ENCODE measurements at regions of chr22 and their contacts with region 1.

Region 1: DNA sequence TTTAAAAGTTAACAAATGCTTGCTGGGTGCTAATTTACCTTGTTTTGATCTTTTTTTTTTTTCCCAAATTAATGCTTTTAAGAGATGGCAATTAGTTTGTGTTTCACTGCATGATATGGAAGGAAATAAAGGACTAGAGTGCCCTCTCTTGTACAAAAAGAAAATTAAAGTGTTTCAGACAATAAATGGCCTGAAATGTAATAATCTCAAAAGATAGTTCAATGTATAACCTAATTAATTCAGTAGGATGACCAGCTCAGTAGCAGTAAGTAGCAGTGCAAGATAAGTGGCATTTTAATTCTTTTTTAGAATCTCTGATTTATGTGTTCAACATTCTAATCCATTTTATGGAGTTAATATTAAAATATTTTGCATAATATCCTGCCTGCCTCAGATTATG is 39.9 kb upstream of the MYO18B start:
- DNase-seq: no peak
- ATAC-seq: peak in 1 of 2 donors; percentile 52

Region 2: GRCh38 chr22:25404928-25405816 is 296.9 kb before region 1 on chr22:
- intact Hi-C with region 1: loop called in 1 of 2 experiments (anchors 5 kb)
- DNase-seq: peak; percentile 86
- ATAC-seq: peak; percentile 80

Region 3: DNA sequence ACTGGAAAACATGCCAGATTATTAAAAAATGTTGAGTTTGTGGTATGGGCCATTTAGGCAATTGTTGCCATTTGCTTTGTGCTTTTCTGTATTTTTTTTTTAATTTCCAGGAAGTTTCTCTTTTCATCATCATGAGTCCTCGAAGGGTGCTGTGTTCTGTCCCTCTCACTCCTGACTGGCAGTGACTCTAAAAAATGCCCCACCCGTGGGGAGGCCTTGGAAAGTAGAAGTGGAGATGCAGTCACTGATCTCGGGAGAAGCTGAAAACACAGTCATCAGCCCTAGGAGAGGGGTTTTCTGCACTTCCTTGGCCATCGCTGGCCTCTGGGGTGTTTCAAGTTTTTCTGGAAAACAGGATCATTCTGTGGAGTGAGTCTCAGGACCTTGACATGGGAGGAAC is 236.1 kb before region 1 on chr22:
- intact Hi-C with region 1: loop called (anchors 2 to 5 kb)
- DNase-seq: no peak
- ATAC-seq: no peak

Region 4: DNA sequence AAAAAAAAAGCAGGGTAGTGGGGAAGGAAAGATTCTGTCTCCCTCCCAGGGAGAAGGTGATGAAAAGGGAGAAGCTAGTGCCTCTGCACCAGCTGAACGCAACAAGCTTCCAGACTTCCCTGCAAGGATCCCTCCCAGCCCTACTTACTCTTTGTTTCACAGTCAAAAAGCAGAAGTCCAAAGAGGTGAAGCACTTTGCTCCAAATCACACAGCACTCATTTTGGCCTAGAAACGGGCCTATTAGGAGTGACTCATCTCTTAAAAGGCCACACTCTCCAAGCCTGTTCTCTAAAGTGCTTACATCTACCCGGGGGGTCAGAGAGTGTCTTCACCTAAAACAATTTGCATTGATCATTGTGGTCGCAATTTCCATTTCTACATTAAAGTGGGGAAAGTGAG is 155.3 kb before region 1 on chr22:
- intact Hi-C with region 1: loop called (anchors 10 kb)
- DNase-seq: no peak
- ATAC-seq: peak in 1 of 2 donors; percentile 59

Region 5: DNA sequence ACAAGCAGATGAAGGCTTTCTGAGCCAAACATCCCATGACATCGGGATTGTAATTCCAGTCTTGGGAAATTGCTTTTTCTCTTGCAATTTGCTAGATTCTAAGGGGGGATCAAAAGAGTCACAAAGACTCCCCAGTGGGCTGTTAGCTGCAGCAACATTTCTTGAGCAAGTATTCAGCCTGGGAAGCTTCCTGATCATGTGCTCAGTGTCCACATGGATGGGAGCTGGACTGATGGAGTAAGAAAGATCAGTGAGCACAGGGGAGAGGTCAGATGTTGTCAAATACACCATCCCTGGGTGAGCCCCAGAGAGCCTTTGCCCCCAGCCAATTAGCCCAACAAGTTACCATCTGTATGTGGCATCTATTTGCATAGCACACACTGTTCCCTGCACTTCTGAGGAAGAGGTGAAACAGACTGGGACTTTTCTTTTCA is 147.8 kb before region 1 on chr22:
- intact Hi-C with region 1: loop called (anchors 10 kb)
- DNase-seq: no peak
- ATAC-seq: peak in 1 of 2 donors; percentile 80

Region 6: DNA sequence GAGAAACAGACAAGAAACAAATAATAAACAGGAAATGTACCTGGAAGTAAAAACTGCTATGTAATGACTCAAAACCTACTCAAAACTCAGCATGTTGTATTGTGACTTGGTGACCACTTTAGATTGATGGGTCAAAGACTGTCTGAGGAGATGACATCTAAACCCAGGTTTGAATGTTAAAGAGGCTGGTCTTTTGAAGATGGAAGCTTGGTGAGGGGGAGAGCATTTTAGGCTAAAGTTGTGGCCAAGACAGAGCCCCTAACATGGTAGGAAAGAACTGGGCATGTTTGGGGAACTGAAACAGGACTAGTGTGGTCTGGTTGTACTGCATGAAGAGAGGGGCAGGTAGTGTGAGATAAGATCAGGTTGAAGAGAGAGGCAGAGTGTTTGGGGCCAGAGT is 45.3 kb before region 1 on chr22:
- intact Hi-C with region 1: no loop called
- DNase-seq: no peak
- ATAC-seq: no peak

Measured in left cardiac atrium (tissue), 4 donors.